ENCODE measurements at regions of chr3 and their contacts with region 1.

Region 1: DNA sequence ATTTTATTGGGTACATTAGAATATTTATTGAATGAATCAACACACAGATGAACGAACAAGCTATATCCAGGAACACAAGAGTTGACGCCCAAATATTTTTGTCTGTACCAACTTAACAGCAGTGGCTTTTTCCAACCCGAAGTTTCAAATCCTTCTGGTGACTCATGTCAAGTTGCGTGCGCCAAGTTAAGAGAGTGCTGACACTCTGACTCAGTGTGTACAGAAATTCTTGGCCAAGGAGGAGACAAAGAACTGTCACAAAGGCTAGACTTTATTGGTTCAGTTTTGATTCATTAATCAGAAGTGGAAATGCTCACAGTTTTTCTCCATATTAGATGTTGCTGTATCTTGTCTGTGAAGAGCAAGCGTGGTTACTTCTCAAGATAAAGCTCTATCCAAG is 59.6 kb upstream of the TSC22D2 start:
- DNase-seq: peak; percentile 96
- ATAC-seq: peak; percentile 78
- H3K4me3 ChIP-seq: peak overlapping the region; percentile 53
- H3K27ac ChIP-seq: peak overlapping the region; percentile 83
- H3K4me1 ChIP-seq: peaks cover 72% of the 10 kb centered on the region
- H3K27me3 ChIP-seq: no peaks in the 10 kb centered on the region
- CTCF ChIP-seq: no peak

Region 2: DNA sequence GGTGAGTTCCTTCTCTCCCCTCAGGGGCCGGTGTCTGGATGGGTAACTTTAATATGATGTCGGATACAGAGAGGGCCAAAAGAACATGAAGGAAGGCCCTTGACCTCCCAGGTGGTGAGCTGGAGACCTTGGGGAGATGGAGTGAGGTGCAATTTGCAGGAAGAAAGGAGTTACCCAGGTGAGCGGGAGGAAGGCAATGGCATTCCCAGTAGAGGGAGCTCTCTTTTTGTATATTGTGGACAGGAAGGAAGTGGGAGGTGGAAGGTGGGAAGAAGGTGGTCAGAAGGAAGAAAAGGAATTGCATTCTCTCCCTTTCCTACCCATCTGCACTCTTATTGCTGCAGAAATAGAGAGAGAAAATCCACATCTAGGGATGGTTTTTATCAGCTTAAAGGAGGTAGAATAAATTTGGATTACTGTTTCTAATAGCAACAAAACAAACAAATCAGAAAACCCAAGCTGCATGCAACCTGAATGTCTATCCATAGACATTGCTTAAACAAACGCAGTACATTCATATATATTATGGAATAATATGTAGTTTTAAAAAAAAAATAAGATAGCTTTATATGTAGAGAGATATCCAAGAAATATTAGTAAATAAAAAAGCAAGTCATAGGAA is 109.4 kb before region 1 on chr3:
- CTCF ChIA-PET with region 1: interaction called, 3 read pairs
- POLR2A ChIA-PET with region 1: no interaction called
- intact Hi-C with region 1: loop called (anchors 1 kb)
- DNase-seq: peak; percentile 77
- ATAC-seq: peak; percentile 40
- H3K4me3 ChIP-seq: peak overlapping the region; percentile 61
- H3K27ac ChIP-seq: peak overlapping the region; percentile 95
- H3K4me1 ChIP-seq: peaks cover 46% of the 10 kb centered on the region
- H3K27me3 ChIP-seq: no peaks in the 10 kb centered on the region
- CTCF ChIP-seq: peak; percentile 96

Measured in PC-3 (cell line).